ENCODE measurements at regions of chr3 and their contacts with region 1.

Region 1: DNA sequence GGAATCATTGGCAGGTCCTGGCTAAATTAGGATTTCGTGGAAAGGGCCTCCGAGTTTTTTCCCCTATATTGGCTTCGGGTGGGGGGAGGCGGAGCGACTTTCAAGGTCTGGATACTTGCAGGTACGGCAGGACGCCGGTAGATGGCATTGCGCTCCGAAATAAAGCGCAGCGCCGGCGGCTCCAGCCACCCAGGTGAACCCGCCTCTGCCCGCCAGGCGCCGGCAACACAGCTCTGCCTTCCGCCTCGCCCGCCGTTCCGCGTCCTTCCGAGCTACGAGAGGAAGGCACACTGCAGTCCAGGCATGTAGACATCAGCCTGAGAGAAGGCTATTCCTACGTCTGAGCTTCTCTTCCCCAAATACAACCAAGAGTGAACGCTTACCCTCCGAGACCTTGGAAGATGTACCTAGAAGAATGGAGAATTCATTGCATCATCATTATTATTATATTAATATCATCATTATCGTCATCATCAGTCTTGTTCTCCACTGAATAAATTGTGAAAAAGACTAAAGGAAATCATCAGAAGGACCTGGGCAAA is 514.1 kb downstream of the MECOM start:
- DNase-seq: peak; percentile 33 to 77 (median 52)
- ATAC-seq: peak; percentile 87
- H3K4me3 ChIP-seq: no peak overlapping the region
- H3K4me3 Mint-ChIP-seq: peak overlapping the region in 6 of 10 donors; percentile 12 to 71 (median 44)
- H3K27ac ChIP-seq: no peak overlapping the region
- H3K27ac Mint-ChIP-seq: peak overlapping the region in 1 of 9 donors; percentile 33
- H3K4me1 ChIP-seq: peaks cover 7 to 9% of the 10 kb centered on the region in 2 donors
- H3K4me1 Mint-ChIP-seq: peaks cover 13 to 32% (median 23%) of the 10 kb centered on the region in 7 donors
- H3K27me3 ChIP-seq: peaks cover 5 to 29% of the 10 kb centered on the region in 2 donors
- H3K27me3 Mint-ChIP-seq: peaks cover 70 to 77% (median 72%) of the 10 kb centered on the region in 5 donors

Region 2: DNA sequence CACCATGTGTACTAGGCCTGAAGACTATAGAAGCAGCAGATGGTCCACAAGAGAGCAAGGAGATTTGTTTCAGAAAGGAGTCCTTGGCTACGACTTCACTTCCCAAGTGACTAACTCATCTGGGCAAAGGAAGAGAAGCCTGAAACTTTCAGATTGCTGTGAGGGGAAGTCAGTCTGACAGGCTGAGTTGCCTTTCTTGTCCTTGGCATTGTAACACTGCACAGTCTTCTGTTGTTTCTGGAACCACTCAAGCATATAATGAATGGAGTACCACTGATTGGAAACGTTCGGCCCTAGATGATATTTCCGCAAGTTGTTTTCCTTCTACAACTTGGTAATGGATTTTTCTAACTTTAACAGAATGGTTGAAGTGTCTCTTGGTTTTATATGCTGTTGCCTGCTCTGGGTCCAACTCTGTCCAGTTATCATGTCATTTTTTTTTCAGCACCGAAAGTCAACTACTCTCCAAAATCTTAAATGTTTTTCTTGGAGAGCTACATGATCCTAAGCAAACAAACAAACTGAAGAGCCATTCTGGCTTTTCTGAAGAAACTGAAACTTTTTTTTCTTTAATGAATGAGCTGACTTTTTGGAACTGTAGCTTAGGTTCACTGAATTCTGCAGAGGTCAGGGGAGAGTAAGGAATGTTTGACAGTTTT is 171.6 kb before region 1 on chr3:
- CTCF ChIA-PET with region 1: no interaction called
- POLR2A ChIA-PET with region 1: no interaction called
- intact Hi-C with region 1: no loop called
- DNase-seq: no peak
- ATAC-seq: no peak
- H3K4me3 ChIP-seq: no peak overlapping the region
- H3K4me3 Mint-ChIP-seq: no peak overlapping the region
- H3K27ac ChIP-seq: no peak overlapping the region
- H3K27ac Mint-ChIP-seq: no peak overlapping the region
- H3K4me1 ChIP-seq: no peaks in the 10 kb centered on the region
- H3K4me1 Mint-ChIP-seq: no peaks in the 10 kb centered on the region
- H3K27me3 ChIP-seq: no peaks in the 10 kb centered on the region
- H3K27me3 Mint-ChIP-seq: no peaks in the 10 kb centered on the region

Region 3: DNA sequence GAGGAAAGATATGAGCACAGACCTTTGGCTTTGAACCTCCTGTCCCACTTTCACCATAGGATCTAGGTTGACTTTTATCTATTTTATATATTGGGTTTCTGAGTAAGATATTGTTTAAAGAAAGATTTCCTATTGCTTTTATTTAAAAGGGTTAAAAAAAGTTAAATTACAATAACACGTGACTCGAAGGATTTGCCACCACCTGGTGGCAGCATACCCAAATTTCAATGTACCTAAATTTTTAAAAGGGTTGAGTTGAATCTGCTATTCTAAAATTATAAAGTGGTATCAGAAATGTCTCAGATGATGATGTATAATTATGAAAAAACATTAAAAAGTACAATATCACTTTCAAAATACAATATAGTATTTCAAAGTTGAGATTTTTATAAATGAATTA is 145.7 kb after region 1 on chr3:
- CTCF ChIA-PET with region 1: no interaction called
- POLR2A ChIA-PET with region 1: no interaction called
- intact Hi-C with region 1: loop called in 1 of 2 experiments (anchors 5 kb)
- DNase-seq: no peak
- ATAC-seq: no peak
- H3K4me3 ChIP-seq: no peak overlapping the region
- H3K4me3 Mint-ChIP-seq: no peak overlapping the region
- H3K27ac ChIP-seq: no peak overlapping the region
- H3K27ac Mint-ChIP-seq: no peak overlapping the region
- H3K4me1 ChIP-seq: no peaks in the 10 kb centered on the region
- H3K4me1 Mint-ChIP-seq: no peaks in the 10 kb centered on the region
- H3K27me3 ChIP-seq: peaks cover 0 to 5% of the 10 kb centered on the region in 2 donors
- H3K27me3 Mint-ChIP-seq: peaks cover 0 to 13% (median 9%) of the 10 kb centered on the region in 5 donors

Region 4: GRCh38 chr3:169662132-169662842 is 512.9 kb after region 1 on chr3:
- CTCF ChIA-PET with region 1: no interaction called
- POLR2A ChIA-PET with region 1: no interaction called
- intact Hi-C with region 1: loop called (anchors 1 to 2 kb)
- DNase-seq: peak in 2 of 9 donors; percentile 29 to 50
- ATAC-seq: peak; percentile 69
- H3K4me3 ChIP-seq: peak overlapping the region; percentile 60
- H3K4me3 Mint-ChIP-seq: peak overlapping the region; percentile 78 to 92 (median 85)
- H3K27ac ChIP-seq: no peak overlapping the region
- H3K27ac Mint-ChIP-seq: no peak overlapping the region
- H3K4me1 ChIP-seq: peaks cover 18 to 33% of the 10 kb centered on the region in 2 donors
- H3K4me1 Mint-ChIP-seq: peaks cover 35 to 72% (median 45%) of the 10 kb centered on the region in 7 donors
- H3K27me3 ChIP-seq: peaks cover 20 to 84% of the 10 kb centered on the region in 2 donors
- H3K27me3 Mint-ChIP-seq: peaks cover 85 to 93% (median 88%) of the 10 kb centered on the region in 5 donors

Measured in naive thymus-derived CD4-positive, alpha-beta T cell (primary cell).